Astrocyte of the cerebellum (primary cell): ENCODE measurements at regions of chr20 and their contacts with region 1.

Region 1: DNA sequence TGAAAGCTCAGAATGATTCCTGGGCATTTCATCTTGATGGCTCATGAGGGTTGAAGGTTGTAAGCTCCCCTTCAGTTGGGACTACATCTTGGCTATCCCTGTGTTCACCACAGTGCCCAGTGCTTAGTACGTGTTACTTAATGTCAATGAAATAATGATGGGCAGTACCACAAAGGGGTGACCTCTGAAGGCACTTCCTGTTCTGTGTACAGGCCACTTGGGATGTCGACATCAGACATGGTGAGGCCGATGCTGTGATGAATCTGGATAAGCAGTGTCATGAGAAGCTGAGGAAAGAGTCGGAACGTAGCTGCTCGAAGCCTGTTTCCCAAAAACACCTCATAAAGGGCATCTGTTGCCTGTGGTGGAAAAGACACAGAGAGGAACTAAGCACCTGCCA is 27.6 kb upstream of the RBL1 start:
- DNase-seq: no peak
- H3K4me3 ChIP-seq: no peak overlapping the region
- CTCF ChIP-seq: no peak

Region 2: GRCh38 chr20:37165031-37165430 is 41.6 kb after region 1 on chr20:
- in situ Hi-C with region 1: loop called (anchors 5 kb)
- DNase-seq: no peak
- H3K4me3 ChIP-seq: no peak overlapping the region
- CTCF ChIP-seq: no peak